MCF 10A (cell line): ENCODE measurements at regions of chr11 and their contacts with region 1.

Region 1: GRCh38 chr11:69683764-69684333 is 8.7 kb upstream of the LTO1 start:
- DNase-seq: peak; percentile 45
- H3K4me3 Mint-ChIP-seq: no peak overlapping the region
- H3K27ac Mint-ChIP-seq: no peak overlapping the region
- H3K4me1 Mint-ChIP-seq: peaks cover 7% of the 10 kb centered on the region
- H3K27me3 Mint-ChIP-seq: no peaks in the 10 kb centered on the region
- CTCF ChIP-seq: peak; percentile 66

Region 2: DNA sequence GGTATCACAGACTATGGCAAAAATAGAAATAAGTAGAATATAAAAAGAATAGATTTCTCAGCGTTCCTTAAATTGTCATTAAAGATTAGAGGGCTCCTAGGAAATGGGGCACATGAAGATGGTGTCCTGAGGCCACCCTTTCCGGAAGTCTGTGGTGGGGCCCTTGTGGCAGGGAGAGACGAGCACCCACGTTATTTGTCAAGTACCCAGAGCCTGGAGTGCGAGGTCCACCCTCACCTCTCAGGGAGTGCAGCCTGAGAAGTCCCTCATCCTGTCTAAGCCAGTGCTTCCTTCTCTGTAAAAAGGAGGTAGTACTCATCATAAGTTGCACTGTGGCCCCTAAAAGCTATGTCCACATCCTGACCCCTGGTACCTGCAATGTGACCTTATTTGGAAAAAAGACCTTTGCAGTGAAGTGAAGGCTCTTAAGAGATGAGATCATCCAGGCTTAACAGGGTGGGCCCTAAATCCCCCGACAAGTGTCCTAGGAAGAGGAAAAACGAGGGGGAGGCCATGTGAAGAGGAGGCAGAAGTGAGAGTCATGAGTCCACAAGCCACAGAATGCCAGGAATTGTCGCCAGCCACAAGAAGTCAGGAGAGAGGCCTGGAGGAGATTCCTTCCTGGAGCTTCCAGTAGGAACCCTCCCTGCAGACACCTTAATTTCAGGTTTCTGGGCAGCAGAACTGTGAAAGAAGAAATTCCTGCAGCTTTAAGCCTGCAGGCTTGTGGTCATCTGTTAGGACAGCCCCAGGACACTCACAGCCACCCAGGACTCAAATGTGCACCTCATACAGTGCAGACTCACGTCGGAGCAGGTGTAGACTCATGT is 119.7 kb before region 1 on chr11:
- CTCF ChIA-PET with region 1: no interaction called
- POLR2A ChIA-PET with region 1: no interaction called
- intact Hi-C with region 1: no loop called
- DNase-seq: no peak
- H3K4me3 Mint-ChIP-seq: no peak overlapping the region
- H3K27ac Mint-ChIP-seq: no peak overlapping the region
- H3K4me1 Mint-ChIP-seq: no peaks in the 10 kb centered on the region
- H3K27me3 Mint-ChIP-seq: no peaks in the 10 kb centered on the region
- CTCF ChIP-seq: no peak

Region 3: GRCh38 chr11:69716891-69717747 is 33.3 kb after region 1 on chr11:
- CTCF ChIA-PET with region 1: no interaction called
- POLR2A ChIA-PET with region 1: no interaction called
- intact Hi-C with region 1: no loop called
- DNase-seq: no peak
- H3K4me3 Mint-ChIP-seq: no peak overlapping the region
- H3K27ac Mint-ChIP-seq: no peak overlapping the region
- H3K4me1 Mint-ChIP-seq: no peaks in the 10 kb centered on the region
- H3K27me3 Mint-ChIP-seq: peaks cover 30% of the 10 kb centered on the region
- CTCF ChIP-seq: no peak

Region 4: GRCh38 chr11:69801519-69802335 is 117.9 kb after region 1 on chr11:
- CTCF ChIA-PET with region 1: no interaction called
- POLR2A ChIA-PET with region 1: no interaction called
- intact Hi-C with region 1: loop called (anchors 5 kb)
- DNase-seq: peak; percentile 19
- H3K4me3 Mint-ChIP-seq: no peak overlapping the region
- H3K27ac Mint-ChIP-seq: no peak overlapping the region
- H3K4me1 Mint-ChIP-seq: no peaks in the 10 kb centered on the region
- H3K27me3 Mint-ChIP-seq: no peaks in the 10 kb centered on the region
- CTCF ChIP-seq: peak; percentile 82

Region 5: DNA sequence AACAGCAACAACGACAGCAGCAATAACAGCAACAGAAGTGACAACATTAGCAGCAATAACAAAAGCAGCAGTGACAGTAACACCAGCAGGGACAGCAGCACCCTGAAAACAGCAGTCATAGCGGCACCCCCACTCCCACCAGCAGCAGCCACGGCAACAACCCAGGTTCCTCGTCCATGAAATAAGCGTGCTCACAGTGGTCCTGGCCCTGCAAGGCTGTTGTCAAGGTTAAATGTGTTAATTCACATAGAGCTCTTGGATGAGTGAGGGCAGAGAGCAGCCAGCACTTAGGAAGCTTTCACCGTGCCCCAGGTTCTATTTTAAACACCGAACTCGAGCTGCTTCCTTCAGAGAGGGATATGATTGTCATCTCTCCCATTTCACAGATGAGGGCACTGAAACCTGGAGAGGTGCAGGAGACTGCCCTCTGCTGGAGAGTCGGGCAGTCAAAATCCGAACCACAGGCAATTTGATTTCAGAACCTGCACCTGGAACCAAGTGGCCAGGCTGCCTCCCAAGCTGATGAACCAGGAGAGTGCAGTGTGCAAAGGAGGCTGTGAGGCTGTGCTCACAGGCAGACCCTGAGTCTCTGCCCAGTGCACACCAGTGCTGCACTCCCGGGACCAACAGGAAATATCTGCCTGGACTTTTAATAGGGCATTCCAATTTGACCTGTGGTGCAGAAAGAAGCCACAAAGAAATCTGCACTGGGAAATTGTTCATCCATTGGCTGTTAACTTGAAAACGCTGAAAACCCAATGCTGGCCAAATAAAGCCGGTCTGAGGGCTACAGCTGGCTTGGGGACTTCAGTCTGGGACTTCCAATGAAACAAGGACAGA is 158.2 kb after region 1 on chr11:
- CTCF ChIA-PET with region 1: interaction called, 3 read pairs
- POLR2A ChIA-PET with region 1: no interaction called
- intact Hi-C with region 1: loop called (anchors 5 kb)
- DNase-seq: peak; percentile 37
- H3K4me3 Mint-ChIP-seq: no peak overlapping the region
- H3K27ac Mint-ChIP-seq: no peak overlapping the region
- H3K4me1 Mint-ChIP-seq: no peaks in the 10 kb centered on the region
- H3K27me3 Mint-ChIP-seq: peaks cover 12% of the 10 kb centered on the region
- CTCF ChIP-seq: peak; percentile 27

Region 6: GRCh38 chr11:69888483-69889076 is 204.7 kb after region 1 on chr11:
- CTCF ChIA-PET with region 1: interaction called, 13 read pairs
- POLR2A ChIA-PET with region 1: no interaction called
- intact Hi-C with region 1: loop called (anchors 1 kb)
- DNase-seq: peak; percentile 69
- H3K4me3 Mint-ChIP-seq: no peak overlapping the region
- H3K27ac Mint-ChIP-seq: no peak overlapping the region
- H3K4me1 Mint-ChIP-seq: no peaks in the 10 kb centered on the region
- H3K27me3 Mint-ChIP-seq: peaks cover 12% of the 10 kb centered on the region
- CTCF ChIP-seq: peak; percentile 89

Region 7: DNA sequence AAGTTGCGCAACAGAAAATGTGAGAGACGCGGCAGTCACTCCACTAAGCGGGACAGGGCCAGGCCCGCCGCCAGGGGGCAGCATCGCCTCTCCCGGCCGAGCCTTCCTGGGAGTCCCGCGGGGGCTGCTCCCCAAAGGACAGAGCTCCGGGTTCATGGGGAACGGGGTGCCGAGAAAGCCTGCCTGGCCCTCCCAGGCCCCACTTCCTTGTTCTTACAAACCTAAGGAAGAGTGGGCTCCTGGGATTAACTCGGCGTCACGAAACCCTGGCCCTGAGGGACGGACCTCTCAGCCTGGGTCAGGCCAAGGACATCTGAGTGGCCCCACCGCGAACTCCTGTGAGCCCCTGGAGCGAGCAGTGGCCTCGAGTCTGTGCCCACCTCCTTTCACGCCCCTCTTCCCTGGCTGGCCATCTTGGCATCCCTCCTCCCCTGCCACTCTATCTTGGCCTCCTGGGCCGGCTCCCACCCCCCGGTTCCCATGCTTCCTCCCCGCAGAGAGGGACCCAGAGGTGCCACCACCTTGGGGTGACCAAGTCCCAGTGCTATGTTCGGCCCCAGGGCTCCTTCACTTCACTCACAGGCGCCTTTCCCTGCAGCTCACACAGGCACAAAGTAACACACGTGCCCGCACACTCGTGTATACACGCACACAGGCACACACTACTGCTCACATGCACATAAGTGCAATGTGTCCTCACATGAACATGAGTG is 235.2 kb after region 1 on chr11:
- CTCF ChIA-PET with region 1: interaction called, 3 read pairs
- POLR2A ChIA-PET with region 1: no interaction called
- intact Hi-C with region 1: loop called (anchors 10 kb)
- DNase-seq: peak; percentile 70
- H3K4me3 Mint-ChIP-seq: no peak overlapping the region
- H3K27ac Mint-ChIP-seq: no peak overlapping the region
- H3K4me1 Mint-ChIP-seq: peaks cover 15% of the 10 kb centered on the region
- H3K27me3 Mint-ChIP-seq: peaks cover 25% of the 10 kb centered on the region
- CTCF ChIP-seq: peak; percentile 93